Activated CD8-positive, alpha-beta T cell treated with anti-CD3 and anti-CD28 coated beads, Interleukin-2, amount 10 ng/mL, durations not matched to agents 7 days and 5 days (primary cell): ENCODE measurements at regions of chr7 and their contacts with region 1.

Region 1: GRCh38 chr7:140375892-140376730 is 22.2 kb downstream of the SLC37A3 start:
- DNase-seq: peak; percentile 36
- ATAC-seq: peak; percentile 84
- H3K4me3 Mint-ChIP-seq: peak overlapping the region; percentile 66
- H3K27ac Mint-ChIP-seq: peak overlapping the region; percentile 88
- H3K4me1 Mint-ChIP-seq: peaks cover 25% of the 10 kb centered on the region
- H3K27me3 Mint-ChIP-seq: no peaks in the 10 kb centered on the region

Region 2: GRCh38 chr7:140316165-140316661 is 59.9 kb before region 1 on chr7:
- CTCF ChIA-PET with region 1: no interaction called
- POLR2A ChIA-PET with region 1: no interaction called
- DNase-seq: no peak
- ATAC-seq: no peak
- H3K4me3 Mint-ChIP-seq: no peak overlapping the region
- H3K27ac Mint-ChIP-seq: no peak overlapping the region
- H3K4me1 Mint-ChIP-seq: peaks cover 22% of the 10 kb centered on the region
- H3K27me3 Mint-ChIP-seq: no peaks in the 10 kb centered on the region

Region 3: GRCh38 chr7:140358412-140359051 is 17.6 kb before region 1 on chr7:
- CTCF ChIA-PET with region 1: interaction called, 3 read pairs
- POLR2A ChIA-PET with region 1: interaction called, 10 read pairs
- DNase-seq: peak; percentile 32
- ATAC-seq: peak; percentile 64
- H3K4me3 Mint-ChIP-seq: peak overlapping the region; percentile 29
- H3K27ac Mint-ChIP-seq: peak overlapping the region; percentile 93
- H3K4me1 Mint-ChIP-seq: peaks cover 26% of the 10 kb centered on the region
- H3K27me3 Mint-ChIP-seq: no peaks in the 10 kb centered on the region

Region 4: GRCh38 chr7:140397784-140398750 is 22.0 kb after region 1 on chr7 and contains the start of gene SLC37A3:
- CTCF ChIA-PET with region 1: interaction called, 4 read pairs
- POLR2A ChIA-PET with region 1: interaction called, 24 read pairs
- DNase-seq: peak; percentile 89
- ATAC-seq: peak; percentile 97
- H3K4me3 Mint-ChIP-seq: peak within 1 kb of the TSS; percentile 87
- H3K27ac Mint-ChIP-seq: peak within 1 kb of the TSS; percentile 87
- H3K4me1 Mint-ChIP-seq: peaks cover 31% of the 10 kb centered on the region
- H3K27me3 Mint-ChIP-seq: no peaks in the 10 kb centered on the region
- total RNA-seq, gene SLC37A3: 19.9 to 23.9 TPM

Region 5: DNA sequence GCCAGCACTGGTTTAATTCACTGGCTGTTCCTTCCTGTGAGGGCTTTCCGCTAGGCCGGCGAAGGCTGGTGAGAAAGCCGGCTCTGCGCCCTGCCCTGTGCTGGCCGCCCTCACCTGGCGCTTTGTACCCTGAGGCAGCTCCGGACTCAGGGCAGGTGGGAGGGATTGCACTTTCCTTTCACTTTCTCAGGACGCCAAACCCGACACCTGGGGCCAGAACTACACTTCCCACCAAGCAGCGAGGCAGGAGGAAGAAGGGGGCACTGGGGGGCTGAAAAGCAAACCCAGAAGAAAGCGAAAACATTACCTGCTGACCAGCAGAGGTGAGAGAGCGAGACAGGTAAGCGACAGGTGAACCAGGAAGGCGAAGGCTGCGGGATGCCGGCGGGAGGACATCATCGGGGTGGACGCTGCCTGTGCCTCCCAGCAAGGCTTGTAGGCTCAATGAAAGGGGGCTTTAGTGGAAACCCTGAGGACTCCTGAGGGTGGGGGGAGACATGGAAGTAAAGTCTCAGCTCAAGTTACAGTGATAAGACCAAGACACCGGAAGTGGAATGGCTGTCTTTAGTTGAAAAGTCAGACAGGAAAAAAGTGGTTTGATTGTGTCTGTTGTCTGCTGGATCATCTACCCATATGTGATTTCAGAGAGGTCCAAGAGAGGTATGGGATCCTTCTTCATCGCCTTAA is 27.9 kb after region 1 on chr7 and contains the start of gene RAB19:
- CTCF ChIA-PET with region 1: interaction called, 5 read pairs
- POLR2A ChIA-PET with region 1: interaction called, 14 read pairs
- DNase-seq: peak; percentile 69
- ATAC-seq: peak; percentile 89
- H3K4me3 Mint-ChIP-seq: peak within 1 kb of the TSS; percentile 88
- H3K27ac Mint-ChIP-seq: peak within 1 kb of the TSS; percentile 94
- H3K4me1 Mint-ChIP-seq: peaks cover 31% of the 10 kb centered on the region
- H3K27me3 Mint-ChIP-seq: no peaks in the 10 kb centered on the region
- total RNA-seq, gene RAB19: 7.2 to 7.3 TPM